ENCODE measurements at regions of chr7 and their contacts with region 1.

Region 1: GRCh38 chr7:6106140-6106904 is 75.1 kb downstream of the ANKRD61 start:
- DNase-seq: peak; percentile 58
- H3K4me3 Mint-ChIP-seq: peak overlapping the region; percentile 82
- H3K27ac Mint-ChIP-seq: peak overlapping the region; percentile 82
- H3K4me1 Mint-ChIP-seq: peaks cover 33% of the 10 kb centered on the region
- H3K27me3 Mint-ChIP-seq: no peaks in the 10 kb centered on the region

Region 2: GRCh38 chr7:6026011-6026819 is 80.1 kb before region 1 on chr7:
- CTCF ChIA-PET with region 1: interaction called, 3 read pairs
- intact Hi-C with region 1: loop called (anchors 1 kb)
- DNase-seq: peak; percentile 79
- H3K4me3 Mint-ChIP-seq: no peak overlapping the region
- H3K27ac Mint-ChIP-seq: peak overlapping the region; percentile 84
- H3K4me1 Mint-ChIP-seq: peaks cover 14% of the 10 kb centered on the region
- H3K27me3 Mint-ChIP-seq: no peaks in the 10 kb centered on the region

Region 3: GRCh38 chr7:6228361-6229229 is 122.3 kb after region 1 on chr7:
- CTCF ChIA-PET with region 1: no interaction called
- intact Hi-C with region 1: no loop called
- DNase-seq: no peak
- H3K4me3 Mint-ChIP-seq: no peak overlapping the region
- H3K27ac Mint-ChIP-seq: no peak overlapping the region
- H3K4me1 Mint-ChIP-seq: peaks cover 15% of the 10 kb centered on the region
- H3K27me3 Mint-ChIP-seq: peaks cover 5% of the 10 kb centered on the region